GM12878 (cell line): ENCODE measurements at regions of chr17 and their contacts with region 1.

Region 1: DNA sequence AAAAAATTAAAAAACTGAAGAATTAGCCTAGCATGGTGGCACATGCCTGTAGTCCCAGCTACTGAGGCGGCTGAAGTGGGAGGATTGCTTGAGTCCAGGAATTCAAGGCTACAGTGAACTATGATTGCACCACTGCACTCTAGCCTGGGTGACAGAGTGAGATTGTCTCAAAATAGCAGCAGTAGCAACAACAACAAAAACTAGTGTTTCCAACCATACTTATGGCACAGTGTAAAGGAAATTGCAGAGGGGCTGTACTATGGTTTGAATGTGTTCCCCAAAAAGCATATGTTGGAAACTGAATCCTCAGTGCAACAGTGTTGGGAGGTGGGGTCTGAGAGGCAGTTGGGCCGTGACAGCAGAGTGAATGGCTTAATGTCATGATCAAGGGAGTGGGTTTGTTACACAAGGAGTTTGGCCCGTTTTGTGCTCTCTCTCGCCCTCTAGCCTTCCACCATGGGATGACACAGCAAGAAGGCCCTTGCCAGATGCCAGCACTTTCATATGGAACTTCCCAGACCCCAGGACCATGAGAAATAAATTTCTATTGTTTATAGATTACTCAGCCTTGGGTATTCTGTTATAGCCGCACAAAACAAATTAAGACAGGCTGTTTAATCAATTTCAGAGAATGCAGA is 70.0 kb downstream of the PGS1 start:
- DNase-seq: no peak
- ATAC-seq: no peak
- H3K4me3 ChIP-seq: no peak overlapping the region
- H3K27ac ChIP-seq: no peak overlapping the region
- H3K4me1 ChIP-seq: peaks cover 13% of the 10 kb centered on the region
- H3K27me3 ChIP-seq: no peaks in the 10 kb centered on the region
- CTCF ChIP-seq: peak in 2 of 3 experiments; percentile 30 to 36; a peak in 3 of 6 replicates
- EP300 ChIP-seq: no peak
- POLR2A ChIP-seq: no peak
- RAD21 ChIP-seq: no peak

Region 2: DNA sequence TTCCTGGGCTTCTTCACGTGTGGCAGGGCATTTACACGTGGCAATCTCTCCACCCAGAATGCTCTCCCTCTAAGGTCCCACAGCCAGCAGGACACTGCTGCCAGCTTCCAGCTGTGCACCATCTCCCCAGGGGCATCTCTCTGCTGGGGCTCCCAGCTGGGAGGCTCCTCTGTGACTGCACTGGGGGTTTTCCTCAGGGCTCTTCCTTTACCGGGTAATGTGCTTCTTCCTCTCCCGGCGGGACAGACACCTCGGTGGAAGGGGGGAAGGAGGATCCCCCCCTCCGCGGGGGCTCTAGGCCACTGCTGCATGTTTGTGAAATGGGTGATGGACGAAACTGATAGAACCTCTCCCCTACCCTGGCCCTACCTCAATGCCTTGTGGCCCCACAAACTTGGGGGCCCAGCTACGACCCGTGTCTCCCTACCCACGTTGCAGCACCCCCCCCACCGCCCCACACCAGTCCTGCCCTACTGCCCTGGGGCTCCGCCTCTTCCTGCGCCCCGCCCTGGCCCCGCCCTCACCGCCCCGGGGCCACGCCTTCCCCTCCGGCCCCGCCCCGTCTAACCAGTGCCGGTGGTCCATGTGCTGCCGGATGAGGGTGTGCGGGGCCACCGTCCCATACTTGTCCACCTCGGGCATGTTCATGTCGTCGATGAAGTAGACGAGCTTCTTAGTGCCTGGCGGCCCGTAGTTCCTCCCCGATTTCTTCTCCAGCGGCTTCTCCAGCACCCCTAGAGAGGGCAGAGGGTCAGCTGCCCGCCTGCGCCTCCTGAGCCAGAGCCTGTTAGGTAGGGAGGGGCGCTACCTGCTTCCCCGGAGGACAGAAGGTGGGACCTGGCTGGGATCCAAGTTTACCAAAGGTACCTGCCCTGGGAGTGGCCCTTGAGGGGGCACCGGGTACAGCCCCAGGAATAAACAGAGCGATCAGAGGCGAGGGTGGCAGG is 36.1 kb after region 1 on chr17:
- CTCF ChIA-PET with region 1: interaction called, 4 read pairs
- POLR2A ChIA-PET with region 1: interaction called, 5 read pairs
- RAD21 ChIA-PET with region 1: no interaction called
- SMC1A ChIA-PET with region 1: no interaction called
- in situ Hi-C with region 1: no loop called
- intact Hi-C with region 1: loop called (anchors 5 kb)
- DNase-seq: no peak
- ATAC-seq: peak; percentile 99
- H3K4me3 ChIP-seq: peak overlapping the region; percentile 79
- H3K27ac ChIP-seq: peak overlapping the region; percentile 89
- H3K4me1 ChIP-seq: peaks cover 9% of the 10 kb centered on the region
- H3K27me3 ChIP-seq: no peaks in the 10 kb centered on the region
- CTCF ChIP-seq: no peak
- EP300 ChIP-seq: no peak
- POLR2A ChIP-seq: peak; percentile 69
- RAD21 ChIP-seq: no peak

Region 3: DNA sequence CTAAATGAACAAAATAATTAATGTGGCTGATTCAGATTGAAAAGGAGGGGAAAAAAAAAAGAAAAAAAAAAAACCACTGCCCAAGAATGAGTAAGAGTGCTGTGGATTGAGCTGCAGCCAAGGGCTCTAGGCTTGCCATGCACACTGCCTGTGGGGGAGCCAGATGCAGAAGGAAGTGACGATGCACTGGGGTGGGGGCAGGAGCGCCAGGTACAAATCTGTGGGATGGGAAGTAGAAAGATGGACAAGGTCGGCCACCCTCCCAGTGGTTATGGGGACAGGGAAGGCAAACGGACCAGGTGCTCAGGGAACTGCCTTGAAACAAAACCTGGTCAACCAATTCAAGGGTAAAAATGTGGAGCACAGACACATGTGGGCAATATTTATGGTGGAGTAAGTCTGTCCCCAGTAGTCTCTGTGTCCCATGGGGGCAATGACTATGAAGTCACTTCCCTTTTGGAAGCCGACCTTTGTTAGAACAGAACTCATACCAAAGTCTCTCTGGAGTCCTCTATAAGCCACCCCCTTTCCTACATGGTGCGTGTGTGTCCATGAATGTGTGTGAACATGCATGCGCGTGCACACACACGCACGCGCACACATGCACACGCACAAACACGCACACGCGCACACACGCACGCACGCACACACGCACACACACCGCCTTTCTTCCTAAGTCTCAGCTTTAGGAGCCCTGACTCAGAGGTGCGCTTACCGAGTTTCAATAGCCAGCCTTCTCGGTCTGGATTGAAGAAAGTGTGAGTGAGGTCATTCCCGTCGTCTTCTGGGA is 249.3 kb after region 1 on chr17:
- CTCF ChIA-PET with region 1: no interaction called
- POLR2A ChIA-PET with region 1: no interaction called
- RAD21 ChIA-PET with region 1: no interaction called
- SMC1A ChIA-PET with region 1: no interaction called
- in situ Hi-C with region 1: no loop called
- intact Hi-C with region 1: no loop called
- DNase-seq: no peak
- ATAC-seq: peak; percentile 67
- H3K4me3 ChIP-seq: peak overlapping the region; percentile 25; the same call in 1 of the 2 replicates
- H3K27ac ChIP-seq: peak overlapping the region; percentile 97
- H3K4me1 ChIP-seq: peaks cover 55% of the 10 kb centered on the region
- H3K27me3 ChIP-seq: no peaks in the 10 kb centered on the region
- CTCF ChIP-seq: no peak
- EP300 ChIP-seq: no peak
- POLR2A ChIP-seq: peak; percentile 66
- RAD21 ChIP-seq: no peak